ENCODE measurements at regions of chr5 and their contacts with region 1.

Region 1: DNA sequence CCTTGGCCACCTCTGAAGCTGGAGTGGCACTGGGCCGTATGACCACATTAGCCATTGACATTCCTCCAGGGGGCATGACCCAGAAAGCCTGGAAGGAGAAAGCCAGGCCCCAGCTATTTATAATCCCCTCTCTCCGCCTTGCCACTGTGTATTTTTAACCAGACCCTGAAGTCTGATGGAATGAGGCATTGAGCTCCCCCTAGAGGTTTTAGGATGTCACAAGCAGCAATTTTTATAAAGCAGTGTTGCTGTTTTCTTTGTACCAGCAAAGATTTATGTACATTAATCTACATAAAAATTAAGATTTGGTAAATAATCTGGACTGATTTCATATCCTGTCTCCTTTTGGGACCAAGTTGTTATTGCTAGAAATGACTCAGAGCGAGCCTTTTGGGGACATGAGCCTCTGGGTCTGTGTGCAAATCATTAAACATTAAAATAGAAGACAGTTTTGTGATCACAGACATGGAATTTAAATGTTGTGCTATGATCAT is 127.1 kb downstream of the TRIO start:
- DNase-seq: no peak
- H3K4me3 ChIP-seq: no peak overlapping the region
- H3K27ac ChIP-seq: peak overlapping the region; percentile 58 to 82 (median 70)
- H3K4me1 ChIP-seq: peaks cover 0 to 72% (median 63%) of the 10 kb centered on the region in 4 donors
- H3K27me3 ChIP-seq: no peaks in the 10 kb centered on the region
- CTCF ChIP-seq: peak; percentile 67 to 87 (median 78)
- EP300 ChIP-seq: no peak
- POLR2A ChIP-seq: no peak

Region 2: GRCh38 chr5:14108170-14108996 is 161.9 kb before region 1 on chr5:
- intact Hi-C with region 1: loop called (anchors 1 kb)
- DNase-seq: peak; percentile 86
- H3K4me3 ChIP-seq: peak overlapping the region in 3 of 4 donors; percentile 25 to 35 (median 30)
- H3K27ac ChIP-seq: peak overlapping the region in 2 of 4 donors; percentile 4 to 38
- H3K4me1 ChIP-seq: peaks cover 0 to 7% (median 2%) of the 10 kb centered on the region in 4 donors
- H3K27me3 ChIP-seq: no peaks in the 10 kb centered on the region
- CTCF ChIP-seq: peak; percentile 37 to 82 (median 60)
- EP300 ChIP-seq: no peak
- POLR2A ChIP-seq: no peak

Region 3: DNA sequence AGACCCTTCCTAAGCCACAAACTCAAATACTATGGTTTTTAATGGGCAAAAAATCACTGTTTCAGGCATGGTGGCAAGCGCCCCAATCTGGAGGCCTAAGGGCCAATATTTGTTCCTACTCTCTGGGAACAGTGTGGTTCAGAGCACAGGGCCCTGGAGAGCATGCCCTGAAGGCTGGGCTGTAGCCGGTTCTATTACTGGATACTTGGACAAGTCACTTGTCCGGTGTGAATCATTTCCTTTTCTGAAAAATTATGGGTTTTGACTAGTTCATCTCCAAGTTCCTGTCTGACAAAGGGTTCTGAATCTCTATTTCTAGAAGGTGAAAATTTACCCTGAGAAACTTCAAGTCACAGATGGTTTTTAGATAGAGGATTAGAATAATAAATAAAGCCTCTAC is 469.3 kb after region 1 on chr5:
- intact Hi-C with region 1: no loop called
- DNase-seq: no peak
- H3K4me3 ChIP-seq: no peak overlapping the region
- H3K27ac ChIP-seq: no peak overlapping the region
- H3K4me1 ChIP-seq: peaks cover 0 to 15% (median 4%) of the 10 kb centered on the region in 4 donors
- H3K27me3 ChIP-seq: no peaks in the 10 kb centered on the region
- CTCF ChIP-seq: no peak
- EP300 ChIP-seq: no peak
- POLR2A ChIP-seq: no peak

Measured in sigmoid colon (tissue), 7 donors.